ENCODE measurements at regions of chr3 and their contacts with region 1.

Region 1: DNA sequence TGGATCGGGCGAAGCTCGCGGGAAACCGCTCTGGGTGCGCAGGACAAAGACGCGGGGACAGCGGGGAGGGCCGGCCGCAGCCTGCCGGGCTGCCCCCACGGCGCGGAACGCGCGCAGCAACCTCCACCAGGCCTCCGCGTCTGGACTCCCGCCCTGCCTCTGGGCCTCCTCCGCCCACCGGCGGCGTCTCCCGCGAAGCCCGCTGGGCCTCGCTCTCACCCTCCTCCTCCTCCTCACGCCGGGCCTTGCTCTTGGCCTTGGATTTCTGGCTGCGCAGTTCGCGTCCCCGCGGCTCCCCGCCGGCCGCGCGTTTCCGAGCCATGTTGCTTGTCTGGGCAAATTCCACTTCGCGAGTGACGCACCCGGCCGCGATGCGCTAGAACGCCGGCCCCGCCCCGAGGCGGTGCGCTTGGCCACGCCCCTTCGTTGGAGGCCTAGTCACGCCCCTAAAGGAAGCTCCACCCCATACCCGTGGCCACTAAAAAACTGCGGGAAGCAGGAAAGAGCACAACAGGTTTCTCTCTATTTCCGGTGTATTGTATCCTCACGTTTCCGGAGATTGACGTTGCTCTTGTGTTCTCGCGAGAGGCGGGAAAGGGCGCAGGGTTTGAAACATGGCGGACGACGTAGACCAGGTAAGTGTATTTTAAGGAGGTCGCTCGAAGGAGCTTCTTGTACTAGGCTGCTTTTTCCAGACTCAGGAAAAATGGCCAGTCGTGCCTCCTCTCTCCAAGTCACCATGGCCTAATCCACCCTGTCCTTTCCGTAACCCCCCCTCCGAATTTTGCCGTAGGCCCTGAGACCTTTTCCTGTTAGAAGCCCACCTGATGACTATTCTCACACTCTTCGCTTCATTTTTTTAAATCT is at the starts of genes LSM3 and XPC:
- DNase-seq: peak; percentile 96 to 99 (median 98)
- ATAC-seq: peak; percentile 88
- H3K4me3 ChIP-seq: peak within 1 kb of the TSS; percentile 79
- H3K4me3 Mint-ChIP-seq: peak within 1 kb of the TSS; percentile 98
- H3K27ac ChIP-seq: peak within 1 kb of the TSS; percentile 94 to 97
- H3K27ac Mint-ChIP-seq: peak within 1 kb of the TSS; percentile 93
- H3K4me1 ChIP-seq: peaks cover 43% of the 10 kb centered on the region
- H3K4me1 Mint-ChIP-seq: peaks cover 76% of the 10 kb centered on the region
- H3K27me3 ChIP-seq: no peaks in the 10 kb centered on the region
- H3K27me3 Mint-ChIP-seq: no peaks in the 10 kb centered on the region
- CTCF ChIP-seq: no peak
- total RNA-seq, gene LSM3: 6.5 to 6.9 TPM
- total RNA-seq, gene XPC: 59.2 to 65.1 TPM

Region 2: DNA sequence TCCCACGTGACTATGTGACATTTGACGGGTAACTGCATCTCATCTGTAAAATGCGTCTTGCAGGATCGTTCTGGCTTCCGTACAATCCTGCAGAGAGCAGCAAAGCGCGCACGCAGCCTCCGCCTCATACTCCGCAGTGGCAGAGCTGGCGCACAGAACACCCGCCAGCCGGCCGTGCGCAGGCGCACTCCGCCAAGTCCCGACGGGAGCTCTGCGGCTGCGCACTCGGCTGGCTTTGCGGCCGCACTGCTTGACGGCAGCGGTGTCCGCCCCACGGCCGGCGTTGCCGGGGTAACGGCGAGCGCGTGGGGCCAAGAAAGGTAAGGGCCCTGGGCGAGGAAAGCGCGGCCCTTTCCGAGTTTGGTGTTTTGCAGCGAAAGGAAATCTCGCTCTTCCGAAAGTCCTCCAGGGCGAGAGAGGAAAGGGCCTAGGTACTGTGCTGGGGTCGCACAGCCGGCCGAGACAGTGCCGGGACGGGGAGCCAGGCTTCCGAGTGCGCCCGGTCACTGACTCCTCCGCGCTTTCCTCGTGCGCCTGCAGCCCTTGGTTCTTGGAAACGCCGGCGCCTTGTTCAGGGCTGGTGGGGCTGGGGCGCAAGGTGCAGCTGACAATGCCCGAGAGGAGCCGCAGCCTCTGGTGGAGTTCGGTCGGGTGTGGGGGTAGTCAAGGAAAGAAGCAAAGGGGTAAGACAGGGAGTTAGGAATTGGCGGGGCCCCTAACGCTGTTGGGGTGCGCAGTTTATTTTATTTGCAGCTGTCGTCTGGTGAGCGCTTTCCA is 1694.1 kb before region 1 on chr3 and contains the start of gene TSEN2:
- CTCF ChIA-PET with region 1: no interaction called
- POLR2A ChIA-PET with region 1: no interaction called
- intact Hi-C with region 1: loop called in 1 of 2 experiments (anchors 5 kb)
- DNase-seq: peak; percentile 92 to 99 (median 96)
- ATAC-seq: peak; percentile 96
- H3K4me3 ChIP-seq: peak within 1 kb of the TSS; percentile 87
- H3K4me3 Mint-ChIP-seq: peak within 1 kb of the TSS; percentile 97
- H3K27ac ChIP-seq: peak within 1 kb of the TSS; percentile 72 to 81
- H3K27ac Mint-ChIP-seq: peak within 1 kb of the TSS; percentile 97
- H3K4me1 ChIP-seq: peaks cover 29% of the 10 kb centered on the region
- H3K4me1 Mint-ChIP-seq: peaks cover 52% of the 10 kb centered on the region
- H3K27me3 ChIP-seq: no peaks in the 10 kb centered on the region
- H3K27me3 Mint-ChIP-seq: no peaks in the 10 kb centered on the region
- CTCF ChIP-seq: no peak
- total RNA-seq, gene TSEN2: 8.0 to 8.2 TPM

Region 3: GRCh38 chr3:13419505-13420044 is 758.9 kb before region 1 on chr3:
- CTCF ChIA-PET with region 1: no interaction called
- POLR2A ChIA-PET with region 1: interaction called, 4 read pairs
- intact Hi-C with region 1: loop called in 1 of 2 experiments (anchors 10 kb)
- DNase-seq: peak; percentile 27 to 88 (median 58)
- ATAC-seq: peak; percentile 38
- H3K4me3 ChIP-seq: peak overlapping the region; percentile 85
- H3K4me3 Mint-ChIP-seq: peak overlapping the region; percentile 93
- H3K27ac ChIP-seq: peak overlapping the region; percentile 80 to 89
- H3K27ac Mint-ChIP-seq: peak overlapping the region; percentile 91
- H3K4me1 ChIP-seq: peaks cover 73% of the 10 kb centered on the region
- H3K4me1 Mint-ChIP-seq: peaks cover 71% of the 10 kb centered on the region
- H3K27me3 ChIP-seq: no peaks in the 10 kb centered on the region
- H3K27me3 Mint-ChIP-seq: no peaks in the 10 kb centered on the region
- CTCF ChIP-seq: no peak

Region 4: GRCh38 chr3:14124615-14125190 is 53.8 kb before region 1 on chr3 and contains the starts of genes CHCHD4 and TMEM43:
- CTCF ChIA-PET with region 1: interaction called, 14 read pairs
- POLR2A ChIA-PET with region 1: interaction called, 129 read pairs
- intact Hi-C with region 1: loop called (anchors 1 kb)
- DNase-seq: peak; percentile 94 to 100 (median 98)
- ATAC-seq: peak; percentile 89
- H3K4me3 ChIP-seq: peak within 1 kb of the TSS; percentile 96
- H3K4me3 Mint-ChIP-seq: peak within 1 kb of the TSS; percentile 97
- H3K27ac ChIP-seq: peak within 1 kb of the TSS; percentile 76 to 86
- H3K27ac Mint-ChIP-seq: peak within 1 kb of the TSS; percentile 91
- H3K4me1 ChIP-seq: peaks cover 53% of the 10 kb centered on the region
- H3K4me1 Mint-ChIP-seq: peaks cover 73% of the 10 kb centered on the region
- H3K27me3 ChIP-seq: no peaks in the 10 kb centered on the region
- H3K27me3 Mint-ChIP-seq: no peaks in the 10 kb centered on the region
- CTCF ChIP-seq: no peak
- total RNA-seq, gene CHCHD4: 0.50 to 1.1 TPM
- total RNA-seq, gene TMEM43: 24.8 to 27.6 TPM

Region 5: GRCh38 chr3:14157951-14158350 is 20.5 kb before region 1 on chr3:
- CTCF ChIA-PET with region 1: no interaction called
- POLR2A ChIA-PET with region 1: interaction called, 14 read pairs
- intact Hi-C with region 1: loop called in 1 of 2 experiments (anchors 2 kb)
- DNase-seq: no peak
- ATAC-seq: no peak
- H3K4me3 ChIP-seq: no peak overlapping the region
- H3K4me3 Mint-ChIP-seq: no peak overlapping the region
- H3K27ac ChIP-seq: no peak overlapping the region
- H3K27ac Mint-ChIP-seq: no peak overlapping the region
- H3K4me1 ChIP-seq: peaks cover 2% of the 10 kb centered on the region
- H3K4me1 Mint-ChIP-seq: peaks cover 11% of the 10 kb centered on the region
- H3K27me3 ChIP-seq: no peaks in the 10 kb centered on the region
- H3K27me3 Mint-ChIP-seq: no peaks in the 10 kb centered on the region
- CTCF ChIP-seq: no peak

Region 6: DNA sequence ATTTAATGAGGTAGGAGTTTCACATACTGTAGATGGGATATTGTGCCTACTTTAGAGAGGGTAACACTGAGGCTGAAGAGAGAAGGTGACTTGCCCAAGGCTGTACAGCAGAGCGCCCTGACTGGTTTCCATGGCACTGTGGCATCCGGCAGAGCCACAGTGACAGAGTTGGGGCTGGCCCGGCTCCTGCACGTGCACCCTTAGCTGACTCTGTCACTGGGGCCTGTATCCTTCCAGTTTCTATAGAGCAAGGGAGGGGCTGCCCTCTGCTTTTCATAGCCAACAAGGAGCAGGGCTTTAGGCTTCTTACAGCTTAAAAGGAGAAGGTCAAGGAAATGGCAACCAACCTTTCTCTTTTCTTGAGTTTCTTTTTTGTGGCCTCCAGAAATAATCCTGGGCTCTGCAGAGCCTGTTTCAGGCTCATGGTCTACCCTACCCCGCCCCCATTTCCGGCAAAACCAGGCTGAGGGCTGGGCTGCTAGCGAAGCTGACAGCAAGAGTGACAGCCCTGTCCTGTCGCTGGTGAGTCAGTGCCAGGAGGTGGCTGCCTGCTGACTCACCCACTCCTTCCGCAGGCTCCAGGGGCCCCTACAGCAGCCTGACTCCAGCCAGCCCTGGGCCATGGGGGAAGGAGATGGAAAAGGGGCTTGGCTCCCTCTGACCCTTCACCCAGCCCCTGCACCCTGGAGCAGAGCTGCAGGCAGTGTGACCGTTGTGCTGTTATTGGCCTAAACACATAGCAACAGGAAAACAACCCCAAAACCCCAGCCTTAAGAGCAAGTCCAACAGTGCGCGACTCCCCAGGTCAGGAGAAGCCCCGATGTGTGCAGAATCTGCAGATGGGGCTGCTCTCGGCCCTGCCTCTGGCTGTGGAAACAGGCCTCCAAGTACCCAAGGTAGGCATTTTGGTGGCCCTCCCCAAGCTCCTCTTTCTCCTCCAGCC is 253.7 kb after region 1 on chr3:
- CTCF ChIA-PET with region 1: no interaction called
- POLR2A ChIA-PET with region 1: interaction called, 15 read pairs
- intact Hi-C with region 1: loop called (anchors 1 to 10 kb)
- DNase-seq: peak; percentile 84 to 98 (median 94)
- ATAC-seq: peak; percentile 84
- H3K4me3 ChIP-seq: peak overlapping the region; percentile 31
- H3K4me3 Mint-ChIP-seq: peak overlapping the region; percentile 60
- H3K27ac ChIP-seq: peak overlapping the region; percentile 92 to 97
- H3K27ac Mint-ChIP-seq: peak overlapping the region; percentile 98
- H3K4me1 ChIP-seq: peaks cover 93% of the 10 kb centered on the region
- H3K4me1 Mint-ChIP-seq: peaks cover 92% of the 10 kb centered on the region
- H3K27me3 ChIP-seq: no peaks in the 10 kb centered on the region
- H3K27me3 Mint-ChIP-seq: no peaks in the 10 kb centered on the region
- CTCF ChIP-seq: no peak

Region 7: DNA sequence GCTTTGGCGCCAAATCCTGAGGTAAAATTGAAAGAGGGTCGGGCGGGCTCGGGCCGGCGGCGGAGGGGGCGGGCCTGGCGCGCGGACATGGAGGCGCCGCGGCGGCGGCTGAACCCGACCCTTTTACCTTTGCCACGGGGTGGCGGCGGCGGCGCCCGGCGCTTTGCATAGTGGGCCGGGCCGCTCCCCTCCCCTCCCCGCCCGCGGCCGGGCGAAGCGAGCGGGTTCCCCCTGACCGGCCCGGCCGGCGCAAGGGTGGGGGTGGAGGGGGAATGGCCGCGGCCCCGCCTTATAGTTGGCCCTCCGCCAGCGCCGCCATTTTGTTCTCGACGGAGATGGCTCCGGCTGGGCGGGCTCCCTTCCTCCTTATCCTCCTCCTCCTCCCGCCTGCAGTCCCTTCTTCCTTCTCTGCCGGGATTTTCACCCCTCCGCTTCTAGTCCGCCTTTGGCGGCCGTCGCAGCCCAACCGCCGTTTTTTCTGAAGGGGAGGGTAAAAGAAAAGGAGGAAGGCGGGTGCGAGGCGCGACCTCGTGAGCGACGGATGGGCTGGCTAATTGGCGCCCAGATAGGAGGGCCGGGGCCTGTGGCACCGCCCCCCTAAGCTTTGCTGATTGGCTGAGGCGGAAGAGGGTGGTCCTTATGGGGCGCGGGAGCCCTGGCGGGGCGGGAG is 769.5 kb after region 1 on chr3:
- CTCF ChIA-PET with region 1: no interaction called
- POLR2A ChIA-PET with region 1: interaction called, 7 read pairs
- intact Hi-C with region 1: loop called in 1 of 2 experiments (anchors 10 kb)
- DNase-seq: peak; percentile 93 to 97 (median 95)
- ATAC-seq: peak; percentile 90
- H3K4me3 ChIP-seq: peak overlapping the region; percentile 96
- H3K4me3 Mint-ChIP-seq: peak overlapping the region; percentile 98
- H3K27ac ChIP-seq: peak overlapping the region; percentile 98 to 99
- H3K27ac Mint-ChIP-seq: peak overlapping the region; percentile 98
- H3K4me1 ChIP-seq: peaks cover 30% of the 10 kb centered on the region
- H3K4me1 Mint-ChIP-seq: peaks cover 66% of the 10 kb centered on the region
- H3K27me3 ChIP-seq: no peaks in the 10 kb centered on the region
- H3K27me3 Mint-ChIP-seq: no peaks in the 10 kb centered on the region
- CTCF ChIP-seq: no peak

Measured in CD4-positive, alpha-beta T cell (primary cell).